ENCODE measurements at regions of chr12 and their contacts with region 1.

Region 1: DNA sequence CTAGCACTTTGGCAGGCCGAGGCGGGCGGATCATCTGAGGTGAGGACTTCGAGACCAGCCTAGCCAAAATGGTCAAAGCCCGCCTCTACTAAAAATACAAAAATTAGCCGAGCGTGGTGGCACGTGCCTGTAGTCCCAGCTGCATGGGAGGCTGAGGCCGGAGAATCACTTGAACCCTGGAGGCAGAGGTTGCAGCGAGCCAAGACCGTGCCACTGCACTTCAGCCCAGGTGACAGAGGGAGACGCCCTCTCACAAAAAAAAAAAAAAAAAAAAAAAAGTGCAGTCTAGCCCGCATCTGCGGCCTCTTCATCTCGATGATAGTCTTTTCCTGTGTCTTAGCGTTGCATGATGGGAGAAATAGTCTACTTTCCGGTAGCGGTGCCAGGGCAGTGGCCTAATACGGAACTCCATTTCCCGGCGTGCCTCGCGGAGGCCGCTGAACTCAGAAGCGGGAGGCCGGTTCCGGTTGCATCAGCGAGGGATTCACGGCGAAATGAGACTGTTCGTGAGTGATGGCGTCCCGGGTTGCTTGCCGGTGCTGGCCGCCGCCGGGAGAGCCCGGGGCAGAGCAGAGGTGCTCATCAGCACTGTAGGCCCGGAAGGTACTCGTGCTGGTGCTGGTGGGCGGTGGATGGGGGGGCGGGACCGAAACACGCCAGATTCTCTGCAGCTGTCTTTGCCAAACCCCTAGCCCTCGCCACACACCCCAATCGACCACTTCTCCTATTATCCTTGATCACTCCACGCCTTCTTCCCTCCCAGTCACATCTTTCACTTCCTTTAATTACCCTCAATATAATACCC is at the start of gene MARS1:
- DNase-seq: peak; percentile 96 to 97
- H3K4me3 ChIP-seq: peak within 1 kb of the TSS; percentile 27 to 88 (median 81)
- H3K27ac ChIP-seq: peak within 1 kb of the TSS in 2 of 3 donors; percentile 38 to 65
- H3K4me1 ChIP-seq: peaks cover 7 to 14% of the 10 kb centered on the region in 2 donors
- H3K27me3 ChIP-seq: no peaks in the 10 kb centered on the region
- CTCF ChIP-seq: peak in 1 of 6 experiments; percentile 31
- POLR2A ChIP-seq: peak in 1 of 2 donors; percentile 64
- total RNA-seq, gene MARS1: 55.2 to 173 (median 97.8) TPM

Region 2: GRCh38 chr12:57546438-57547383 is 58.9 kb after region 1 on chr12 and contains the start of gene DCTN2:
- intact Hi-C with region 1: loop called (anchors 2 kb)
- DNase-seq: peak; percentile 96 to 97
- H3K4me3 ChIP-seq: peak within 1 kb of the TSS; percentile 38 to 66 (median 59)
- H3K27ac ChIP-seq: peak within 1 kb of the TSS in 2 of 3 donors; percentile 68 to 82
- H3K4me1 ChIP-seq: peaks cover 12 to 23% of the 10 kb centered on the region in 2 donors
- H3K27me3 ChIP-seq: no peaks in the 10 kb centered on the region
- CTCF ChIP-seq: peak in 1 of 6 experiments; percentile 19
- POLR2A ChIP-seq: peak in 1 of 2 donors; percentile 61
- total RNA-seq, gene DCTN2: 164 to 199 (median 193) TPM

Measured in thyroid gland (tissue), 4 donors.